ENCODE measurements at regions of chr7 and their contacts with region 1.

Region 1: GRCh38 chr7:32062150-32062549 is 8.1 kb downstream of the PDE1C start:
- DNase-seq: peak; percentile 91
- H3K4me3 Mint-ChIP-seq: peak overlapping the region; percentile 3
- H3K27ac Mint-ChIP-seq: no peak overlapping the region
- H3K4me1 Mint-ChIP-seq: peaks cover 47% of the 10 kb centered on the region
- H3K27me3 Mint-ChIP-seq: no peaks in the 10 kb centered on the region
- CTCF ChIP-seq: peak; percentile 89

Region 2: DNA sequence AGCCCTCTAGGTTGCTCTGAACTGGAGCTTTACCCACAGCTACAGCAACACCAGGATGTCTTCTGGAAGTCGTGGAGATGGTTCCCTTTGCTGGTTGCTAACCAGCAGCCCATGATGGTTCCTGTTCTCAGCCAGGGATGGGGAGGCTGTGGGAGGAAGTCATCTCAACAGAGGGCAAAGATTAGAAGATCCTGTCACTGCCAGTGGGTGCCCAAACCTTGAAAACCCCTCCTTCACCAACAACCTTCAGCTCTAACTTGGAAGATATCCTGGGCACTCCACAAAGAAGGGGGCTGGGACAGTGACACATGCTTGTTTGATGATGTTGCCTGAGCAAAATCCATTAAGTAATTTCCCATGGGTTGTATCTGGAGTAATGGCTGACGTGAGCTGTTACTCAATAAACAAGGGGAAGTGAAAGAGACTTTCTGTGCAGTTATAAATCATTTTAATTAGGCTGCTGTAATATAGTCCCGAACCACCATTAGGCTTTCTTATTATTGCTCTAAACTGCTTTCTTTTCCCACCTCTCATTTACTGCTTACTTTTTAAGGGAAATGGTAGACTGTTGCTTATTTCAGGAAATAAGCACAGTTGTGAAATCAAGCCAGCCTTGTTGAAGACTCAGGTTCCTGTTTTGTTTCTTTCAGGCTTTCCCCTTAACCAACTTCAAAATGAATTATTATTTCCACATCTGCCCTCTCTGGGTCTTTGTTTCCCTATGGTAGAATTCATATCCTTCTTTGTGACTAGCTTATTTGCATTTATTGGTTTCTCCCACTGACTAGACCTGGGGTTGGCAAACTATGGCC is 250.3 kb before region 1 on chr7:
- CTCF ChIA-PET with region 1: interaction called, 4 read pairs
- intact Hi-C with region 1: loop called (anchors 5 kb)
- DNase-seq: no peak
- H3K4me3 Mint-ChIP-seq: no peak overlapping the region
- H3K27ac Mint-ChIP-seq: no peak overlapping the region
- H3K4me1 Mint-ChIP-seq: peaks cover 25% of the 10 kb centered on the region
- H3K27me3 Mint-ChIP-seq: no peaks in the 10 kb centered on the region
- CTCF ChIP-seq: no peak

Region 3: GRCh38 chr7:32093415-32094408 is 31.6 kb after region 1 on chr7:
- CTCF ChIA-PET with region 1: no interaction called
- intact Hi-C with region 1: no loop called
- DNase-seq: peak; percentile 54
- H3K4me3 Mint-ChIP-seq: no peak overlapping the region
- H3K27ac Mint-ChIP-seq: peak overlapping the region; percentile 53
- H3K4me1 Mint-ChIP-seq: peaks cover 11% of the 10 kb centered on the region
- H3K27me3 Mint-ChIP-seq: no peaks in the 10 kb centered on the region
- CTCF ChIP-seq: no peak

Region 4: DNA sequence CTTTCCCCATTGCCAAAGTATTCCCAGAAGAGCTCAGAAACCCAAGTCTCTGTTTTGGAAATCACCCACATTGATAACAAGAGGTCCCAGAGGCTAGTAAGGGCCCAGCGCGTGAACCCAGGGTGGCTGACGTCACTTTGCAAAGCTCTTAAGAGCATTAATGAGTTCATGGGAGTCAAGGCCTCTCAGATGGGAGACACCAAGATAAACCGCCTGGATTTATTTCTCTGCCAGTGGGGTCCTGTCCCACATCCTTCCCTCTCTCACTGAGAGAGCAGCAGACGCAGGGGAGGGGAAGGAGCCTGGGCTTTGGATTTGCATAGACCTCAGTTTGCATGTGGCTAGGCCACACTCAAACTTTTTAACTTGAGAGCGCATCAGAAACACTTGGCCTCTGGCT is 192.9 kb after region 1 on chr7:
- CTCF ChIA-PET with region 1: no interaction called
- intact Hi-C with region 1: no loop called
- DNase-seq: no peak
- H3K4me3 Mint-ChIP-seq: no peak overlapping the region
- H3K27ac Mint-ChIP-seq: no peak overlapping the region
- H3K4me1 Mint-ChIP-seq: no peaks in the 10 kb centered on the region
- H3K27me3 Mint-ChIP-seq: peaks cover 18% of the 10 kb centered on the region
- CTCF ChIP-seq: no peak

Measured in Calu3 (cell line).